HEK293 (cell line): ENCODE measurements at regions of chr17 and their contacts with region 1.

Region 1: DNA sequence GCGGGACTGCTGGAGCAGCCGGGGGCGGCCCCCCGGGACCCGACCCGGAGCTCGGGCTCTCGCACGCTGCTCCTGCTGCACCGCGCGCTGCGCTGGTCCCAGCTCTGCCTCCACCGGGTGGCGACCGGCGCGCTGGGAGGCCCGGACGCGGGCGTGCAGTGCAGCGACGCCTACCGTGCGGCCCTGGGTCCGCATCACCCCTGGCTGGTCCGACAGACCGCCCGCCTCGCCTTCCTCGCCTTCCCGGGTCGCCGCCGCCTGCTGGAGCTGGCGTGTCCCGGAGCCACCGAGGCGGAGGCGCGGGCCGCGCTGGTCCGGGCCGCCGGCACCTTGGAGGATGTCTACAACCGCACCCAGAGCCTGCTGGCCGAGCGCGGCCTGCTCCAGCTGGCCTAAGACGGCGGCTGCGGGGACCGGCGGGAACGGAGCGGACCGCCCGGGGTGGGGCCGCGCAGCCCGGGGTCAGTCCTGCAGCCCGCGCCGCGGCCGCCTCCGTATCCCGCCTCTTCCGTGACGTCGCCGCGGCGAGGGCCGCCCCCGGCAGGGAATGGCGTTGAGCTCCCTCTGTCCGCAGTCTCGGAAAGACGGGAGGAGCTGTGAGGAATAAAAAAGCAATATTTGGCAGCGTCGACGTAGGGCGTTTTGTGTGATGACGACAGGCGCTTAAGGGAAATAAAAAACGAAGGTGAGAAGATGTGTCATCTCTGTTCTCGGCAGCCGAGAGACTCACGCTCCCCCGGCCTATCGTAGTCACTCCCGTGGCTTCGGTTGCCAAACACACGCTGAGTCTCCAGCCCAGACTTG is 1.3 kb downstream of the GLTPD2 start:
- H3K4me3 ChIP-seq: peak overlapping the region; percentile 62
- H3K27ac ChIP-seq: peak overlapping the region; percentile 96
- H3K4me1 ChIP-seq: peaks cover 4% of the 10 kb centered on the region
- CTCF ChIP-seq: peak; percentile 92

Region 2: DNA sequence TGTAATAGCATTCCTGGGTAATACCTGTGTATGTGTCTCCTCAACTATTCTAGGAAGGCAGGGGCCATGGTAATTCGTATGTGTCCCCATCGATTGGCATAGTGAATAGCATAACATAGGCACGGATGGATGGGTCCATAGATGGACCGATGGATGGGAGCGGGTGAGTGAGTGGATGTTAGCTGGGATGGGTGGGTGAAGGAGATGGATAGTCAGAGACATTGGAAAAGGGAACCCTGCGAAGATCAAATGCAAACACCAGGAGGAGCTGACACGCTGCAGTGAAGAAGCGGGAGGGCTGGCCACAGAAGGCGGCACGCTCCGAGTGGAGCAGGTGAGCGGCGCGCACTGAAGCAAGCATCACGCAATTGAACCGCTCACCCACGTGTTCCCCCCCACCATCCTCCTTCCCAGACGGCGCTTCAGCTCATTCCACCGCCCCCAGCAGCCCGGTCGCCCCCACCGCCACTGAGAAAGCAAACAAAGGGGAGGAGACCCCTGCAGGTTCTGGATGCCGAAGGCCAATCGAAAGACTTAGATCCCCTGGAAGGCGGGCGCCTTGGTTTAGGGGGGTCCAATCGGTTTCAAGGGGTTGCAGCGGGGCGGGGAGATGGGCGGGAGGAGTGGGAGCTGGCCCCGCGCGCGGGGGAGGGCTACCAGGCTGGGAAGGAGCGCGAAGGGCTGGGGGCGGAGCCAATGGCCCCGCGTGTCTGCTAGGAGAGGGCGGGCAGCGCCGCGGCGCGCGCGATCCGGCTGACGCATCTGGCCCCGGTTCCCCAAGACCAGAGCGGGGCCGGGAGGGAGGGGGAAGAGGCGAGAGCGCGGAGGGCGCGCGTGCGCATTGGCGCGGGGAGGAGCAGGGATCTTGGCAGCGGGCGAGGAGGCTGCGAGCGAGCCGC is 80.1 kb before region 1 on chr17 and contains the start of gene ARRB2:
- CTCF ChIA-PET with region 1: interaction called, 14 read pairs
- POLR2A ChIA-PET with region 1: interaction called, 10 read pairs
- H3K4me3 ChIP-seq: peak within 1 kb of the TSS; percentile 51
- H3K27ac ChIP-seq: peak within 1 kb of the TSS; percentile 84
- H3K4me1 ChIP-seq: peaks cover 5% of the 10 kb centered on the region; the same call in 1 of the 2 replicates
- CTCF ChIP-seq: peak; percentile 94

Region 3: DNA sequence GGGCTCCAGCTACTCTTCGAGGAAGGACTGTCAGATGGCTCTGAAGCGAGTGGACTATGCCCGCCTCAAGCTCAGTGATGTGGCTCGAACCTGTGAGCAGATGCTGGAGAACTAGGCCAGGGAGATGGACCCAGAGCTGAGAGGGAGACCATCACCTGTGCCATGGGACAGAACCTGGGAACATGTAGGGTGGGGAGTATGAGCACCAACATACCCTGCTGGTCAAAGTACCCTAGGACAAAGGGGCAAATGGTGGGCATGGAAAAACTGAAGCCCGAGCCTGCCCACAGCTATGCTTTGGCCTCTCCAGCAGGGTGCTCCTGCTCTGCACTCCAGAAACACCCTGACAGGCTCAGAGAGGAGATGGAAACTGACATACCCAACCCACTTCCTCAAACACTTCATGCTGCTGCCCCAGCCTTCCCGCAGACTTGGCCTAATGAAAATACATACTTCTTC is 57.0 kb before region 1 on chr17:
- CTCF ChIA-PET with region 1: interaction called, 12 read pairs
- POLR2A ChIA-PET with region 1: interaction called, 8 read pairs
- H3K4me3 ChIP-seq: no peak overlapping the region
- H3K27ac ChIP-seq: no peak overlapping the region
- H3K4me1 ChIP-seq: no peaks in the 10 kb centered on the region
- CTCF ChIP-seq: 0 out of 2 replicates have a peak, but pooled peaks have one; percentile 8

Region 4: GRCh38 chr17:4777969-4778761 is 11.9 kb before region 1 on chr17:
- CTCF ChIA-PET with region 1: interaction called, 37 read pairs
- POLR2A ChIA-PET with region 1: interaction called, 23 read pairs
- H3K4me3 ChIP-seq: no peak overlapping the region
- H3K27ac ChIP-seq: no peak overlapping the region
- H3K4me1 ChIP-seq: no peaks in the 10 kb centered on the region
- CTCF ChIP-seq: no peak

Region 5: GRCh38 chr17:4881761-4882555 is 91.9 kb after region 1 on chr17:
- CTCF ChIA-PET with region 1: interaction called, 17 read pairs
- POLR2A ChIA-PET with region 1: no interaction called
- H3K4me3 ChIP-seq: no peak overlapping the region
- H3K27ac ChIP-seq: no peak overlapping the region
- H3K4me1 ChIP-seq: no peaks in the 10 kb centered on the region
- CTCF ChIP-seq: peak; percentile 54; the same call in 1 of the 2 replicates